ENCODE measurements at regions of chr4 and their contacts with region 1.

Region 1: DNA sequence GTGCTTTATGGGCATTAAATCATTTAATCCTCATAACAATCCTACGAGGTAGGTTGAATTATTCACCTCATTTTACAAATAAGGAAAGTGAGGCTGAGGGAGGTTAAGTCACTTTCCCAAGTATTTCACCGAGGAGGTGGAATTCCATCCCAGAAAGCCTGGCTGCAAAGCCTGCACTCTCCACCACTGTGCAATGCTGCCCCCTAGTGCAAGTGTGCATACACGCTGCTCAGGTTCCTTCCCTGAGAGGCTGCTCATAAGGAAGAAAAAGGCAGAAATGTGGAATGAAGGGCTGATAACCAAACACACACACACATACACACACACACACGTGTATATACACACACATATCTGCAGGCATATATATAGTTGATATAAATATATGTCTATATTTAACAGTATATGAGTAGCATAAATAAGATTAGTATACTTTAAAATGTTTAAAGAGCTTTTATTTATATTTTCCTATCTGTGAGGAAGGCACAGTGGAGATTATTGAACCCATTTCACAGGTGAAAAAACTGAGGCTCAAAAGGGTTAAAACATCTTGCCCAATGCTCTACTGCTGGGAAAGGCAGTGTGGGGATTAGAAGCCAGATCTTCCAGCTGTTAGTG is 714.5 kb upstream of the TENM3 start:
- DNase-seq: no peak
- H3K4me3 ChIP-seq: no peak overlapping the region
- H3K4me3 Mint-ChIP-seq: no peak overlapping the region
- H3K27ac ChIP-seq: no peak overlapping the region
- H3K27ac Mint-ChIP-seq: no peak overlapping the region
- H3K4me1 ChIP-seq: no peaks in the 10 kb centered on the region
- H3K4me1 Mint-ChIP-seq: no peaks in the 10 kb centered on the region
- H3K27me3 ChIP-seq: no peaks in the 10 kb centered on the region
- H3K27me3 Mint-ChIP-seq: peaks cover 0 to 1% (median 0%) of the 10 kb centered on the region in 3 donors
- CTCF ChIP-seq: peak; percentile 61

Region 2: DNA sequence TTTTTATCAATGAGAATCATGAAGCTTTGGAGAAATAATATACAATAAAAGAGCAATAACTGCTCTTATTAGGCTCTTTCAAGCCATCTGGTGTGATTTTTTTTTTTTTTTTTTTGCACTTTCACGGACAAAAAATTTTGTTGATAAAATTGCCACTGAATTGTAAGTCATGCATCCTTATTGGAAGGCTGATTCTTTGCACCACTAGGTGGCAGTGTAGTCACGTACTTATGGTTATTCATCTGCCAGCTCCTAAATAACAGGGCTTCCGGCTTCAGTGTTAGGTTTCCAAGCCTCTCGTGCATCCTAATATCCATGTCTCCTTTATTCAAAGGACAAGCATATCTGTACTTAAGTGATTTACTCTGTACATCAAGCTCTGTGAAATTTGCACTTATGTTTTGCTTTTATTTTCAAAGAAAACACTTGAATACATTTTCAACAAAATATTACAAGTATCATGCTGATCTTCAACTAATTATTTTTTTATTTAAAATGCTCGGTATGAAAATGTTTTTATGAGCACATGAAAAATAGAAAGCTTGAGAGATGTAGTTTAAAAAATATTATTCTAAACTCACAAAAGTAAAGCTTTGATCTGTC is 863.8 kb before region 1 on chr4:
- intact Hi-C with region 1: loop called in 1 of 2 experiments (anchors 10 kb)
- DNase-seq: peak; percentile 37 to 71 (median 58)
- H3K4me3 ChIP-seq: no peak overlapping the region
- H3K4me3 Mint-ChIP-seq: no peak overlapping the region
- H3K27ac ChIP-seq: no peak overlapping the region
- H3K27ac Mint-ChIP-seq: no peak overlapping the region
- H3K4me1 ChIP-seq: no peaks in the 10 kb centered on the region
- H3K4me1 Mint-ChIP-seq: no peaks in the 10 kb centered on the region
- H3K27me3 ChIP-seq: no peaks in the 10 kb centered on the region
- H3K27me3 Mint-ChIP-seq: peaks cover 0 to 2% (median 0%) of the 10 kb centered on the region in 3 donors
- CTCF ChIP-seq: peak; percentile 83

Region 3: DNA sequence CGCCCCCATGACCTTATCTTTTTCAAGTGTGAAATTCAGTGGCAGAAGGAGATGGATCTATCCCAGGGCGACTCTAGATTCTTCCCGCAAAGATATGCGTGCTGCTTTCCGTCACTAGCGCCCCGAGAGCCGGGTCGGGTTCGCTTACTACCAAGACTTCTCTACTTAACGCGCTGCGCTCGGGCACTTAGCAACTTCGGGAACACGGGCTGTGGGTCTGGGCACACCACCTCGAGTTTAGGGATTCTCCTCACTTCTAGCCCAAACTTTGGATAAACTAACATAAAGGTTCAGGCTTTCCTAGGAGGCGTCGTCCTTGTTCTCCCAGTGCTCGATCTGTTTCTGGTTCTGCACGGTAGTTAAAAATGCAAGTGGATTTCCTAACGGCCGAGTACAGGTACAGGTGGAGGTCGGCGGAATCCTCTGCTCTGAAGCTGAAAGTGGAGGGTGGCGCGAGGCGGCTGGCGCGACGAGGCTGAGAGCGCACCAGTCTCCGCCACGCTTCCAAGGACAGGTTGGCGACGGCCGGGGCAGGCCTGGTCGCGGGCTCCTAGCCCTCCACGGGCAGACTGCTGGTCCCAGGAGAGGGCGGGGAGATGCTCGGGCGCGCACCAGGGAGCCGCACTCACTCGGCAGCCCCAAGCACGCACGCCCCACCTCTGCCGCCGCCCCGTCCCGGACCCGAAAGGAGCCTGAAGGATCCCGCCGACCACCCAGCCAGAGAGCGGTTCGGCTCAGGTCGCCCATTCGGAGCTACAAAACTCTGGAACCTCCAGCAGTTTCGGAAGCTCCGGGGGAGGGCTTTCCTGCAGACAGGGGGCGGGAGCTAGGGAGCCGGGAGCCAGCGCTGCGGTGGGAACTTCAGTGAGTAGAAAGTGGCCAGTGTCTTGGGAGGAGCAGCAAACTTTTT is 613.8 kb after region 1 on chr4:
- intact Hi-C with region 1: no loop called
- DNase-seq: no peak
- H3K4me3 ChIP-seq: no peak overlapping the region
- H3K4me3 Mint-ChIP-seq: peak overlapping the region in 1 of 2 donors; percentile 86
- H3K27ac ChIP-seq: no peak overlapping the region
- H3K27ac Mint-ChIP-seq: no peak overlapping the region
- H3K4me1 ChIP-seq: no peaks in the 10 kb centered on the region
- H3K4me1 Mint-ChIP-seq: peaks cover 9% of the 10 kb centered on the region
- H3K27me3 ChIP-seq: peaks cover 77 to 95% of the 10 kb centered on the region in 2 donors
- H3K27me3 Mint-ChIP-seq: peaks cover 68 to 84% (median 78%) of the 10 kb centered on the region in 3 donors
- CTCF ChIP-seq: no peak